ENCODE measurements at regions of chr10 and their contacts with region 1.

Region 1: DNA sequence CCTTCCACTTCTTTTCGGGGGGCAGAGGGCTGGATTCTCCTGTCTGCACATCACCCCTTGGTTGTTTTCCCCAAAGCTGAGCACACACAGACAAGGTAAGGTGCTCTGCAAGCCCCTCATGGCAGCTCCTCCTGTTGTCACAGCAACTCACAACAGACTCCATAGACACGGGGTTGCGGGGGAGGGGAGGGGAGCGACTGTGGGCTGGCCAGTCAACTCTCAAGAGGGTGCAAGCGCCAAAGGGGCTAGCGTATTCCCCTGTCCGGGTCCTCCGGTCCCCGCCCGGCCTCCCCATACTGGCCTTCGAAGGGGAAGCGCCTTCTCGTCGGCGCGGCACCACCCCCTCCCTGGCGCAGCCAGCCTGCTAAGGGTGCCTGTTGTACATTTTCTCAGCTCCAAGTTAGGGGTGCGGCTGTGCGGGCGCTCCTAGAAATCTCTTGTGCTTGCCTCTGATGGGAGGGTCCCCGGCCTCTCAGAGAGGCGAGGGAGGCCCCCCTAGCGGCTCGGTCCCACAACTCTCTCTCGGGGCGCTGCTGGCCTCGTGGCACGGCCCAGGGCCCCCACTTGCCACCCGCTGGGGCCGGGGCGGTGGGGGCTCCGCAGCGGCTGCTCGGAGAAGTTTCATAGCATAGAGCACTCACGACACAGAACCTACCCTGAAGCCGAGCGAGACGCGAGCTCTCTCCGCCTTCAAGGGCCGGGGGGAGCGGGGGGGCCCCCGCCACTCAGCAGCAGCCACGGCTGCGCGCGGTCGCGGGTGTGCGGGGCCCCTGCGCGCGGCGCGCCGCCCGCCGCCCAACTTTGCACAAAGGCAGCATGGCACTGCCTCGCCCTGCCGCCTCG is 448 bp downstream of the RHOBTB1 start:
- H3K4me3 ChIP-seq: peak overlapping the region; percentile 64
- H3K27ac ChIP-seq: peak overlapping the region; percentile 81
- H3K4me1 ChIP-seq: peaks cover 6% of the 10 kb centered on the region; the same call in 1 of the 2 replicates
- CTCF ChIP-seq: no peak

Region 2: GRCh38 chr10:60820093-60820754 is 123.3 kb before region 1 on chr10:
- CTCF ChIA-PET with region 1: interaction called, 10 read pairs
- POLR2A ChIA-PET with region 1: no interaction called
- H3K4me3 ChIP-seq: no peak overlapping the region
- H3K27ac ChIP-seq: no peak overlapping the region
- H3K4me1 ChIP-seq: no peaks in the 10 kb centered on the region; the same call in 1 of the 2 replicates
- CTCF ChIP-seq: 0 out of 2 replicates have a peak, but pooled peaks have one; percentile 19

Region 3: DNA sequence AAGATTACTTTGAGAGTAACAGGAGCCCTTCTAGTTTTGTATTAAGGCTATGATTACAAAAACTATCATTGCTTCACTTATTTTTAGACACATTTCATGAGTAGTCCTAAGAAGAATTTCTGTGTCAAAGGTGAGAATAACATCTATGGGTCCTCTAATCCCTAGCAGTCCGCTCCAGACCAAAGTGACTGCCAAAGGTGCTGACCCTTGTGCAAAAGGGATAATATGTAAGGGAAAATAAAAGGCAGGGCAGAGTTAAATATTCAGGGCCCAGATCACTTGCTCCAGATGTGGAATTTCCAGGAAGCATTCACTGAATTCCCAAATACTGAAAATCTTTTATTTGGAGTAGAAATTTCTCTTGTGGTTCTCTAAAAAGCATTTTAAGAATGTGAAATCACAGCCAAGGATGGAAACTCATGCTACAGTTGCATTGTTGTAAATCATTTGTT is 28.8 kb before region 1 on chr10:
- CTCF ChIA-PET with region 1: no interaction called
- POLR2A ChIA-PET with region 1: no interaction called
- H3K4me3 ChIP-seq: no peak overlapping the region
- H3K27ac ChIP-seq: no peak overlapping the region
- H3K4me1 ChIP-seq: no peaks in the 10 kb centered on the region
- CTCF ChIP-seq: no peak

Region 4: GRCh38 chr10:61410353-61410752 is 466.8 kb after region 1 on chr10:
- CTCF ChIA-PET with region 1: no interaction called
- POLR2A ChIA-PET with region 1: no interaction called
- H3K4me3 ChIP-seq: no peak overlapping the region
- H3K27ac ChIP-seq: no peak overlapping the region
- H3K4me1 ChIP-seq: no peaks in the 10 kb centered on the region
- CTCF ChIP-seq: no peak